ENCODE measurements at regions of chr13 and their contacts with region 1.

Region 1: DNA sequence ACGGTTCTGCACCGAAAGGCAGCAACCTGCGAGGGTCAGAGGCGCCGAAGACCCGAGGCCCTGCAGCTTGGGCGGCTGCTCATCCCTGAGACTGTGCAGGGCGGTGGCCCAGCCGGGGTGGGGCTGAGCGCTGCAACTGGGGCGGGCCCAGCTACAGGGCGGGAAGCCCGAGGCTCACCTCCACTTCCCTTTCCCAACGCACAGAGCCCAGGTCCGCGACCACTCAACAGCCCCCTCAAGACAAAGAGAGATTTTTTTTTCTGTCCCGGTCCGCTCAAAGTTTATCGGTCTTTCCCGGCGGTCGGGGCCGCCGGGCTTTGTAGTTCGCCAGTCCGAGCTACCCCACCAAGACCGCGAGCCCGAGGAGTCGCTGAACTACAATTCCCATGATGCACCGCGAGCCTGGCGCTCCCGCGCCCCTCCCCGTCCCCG is 573 bp downstream of the KATNAL1 start:
- DNase-seq: peak; percentile 65 to 94
- H3K4me3 ChIP-seq: peak overlapping the region; percentile 91 to 93
- H3K27ac ChIP-seq: peak overlapping the region; percentile 83 to 90
- H3K4me1 ChIP-seq: peaks cover 5 to 11% of the 10 kb centered on the region in 2 donors
- H3K27me3 ChIP-seq: no peaks in the 10 kb centered on the region
- CTCF ChIP-seq: no peak

Region 2: DNA sequence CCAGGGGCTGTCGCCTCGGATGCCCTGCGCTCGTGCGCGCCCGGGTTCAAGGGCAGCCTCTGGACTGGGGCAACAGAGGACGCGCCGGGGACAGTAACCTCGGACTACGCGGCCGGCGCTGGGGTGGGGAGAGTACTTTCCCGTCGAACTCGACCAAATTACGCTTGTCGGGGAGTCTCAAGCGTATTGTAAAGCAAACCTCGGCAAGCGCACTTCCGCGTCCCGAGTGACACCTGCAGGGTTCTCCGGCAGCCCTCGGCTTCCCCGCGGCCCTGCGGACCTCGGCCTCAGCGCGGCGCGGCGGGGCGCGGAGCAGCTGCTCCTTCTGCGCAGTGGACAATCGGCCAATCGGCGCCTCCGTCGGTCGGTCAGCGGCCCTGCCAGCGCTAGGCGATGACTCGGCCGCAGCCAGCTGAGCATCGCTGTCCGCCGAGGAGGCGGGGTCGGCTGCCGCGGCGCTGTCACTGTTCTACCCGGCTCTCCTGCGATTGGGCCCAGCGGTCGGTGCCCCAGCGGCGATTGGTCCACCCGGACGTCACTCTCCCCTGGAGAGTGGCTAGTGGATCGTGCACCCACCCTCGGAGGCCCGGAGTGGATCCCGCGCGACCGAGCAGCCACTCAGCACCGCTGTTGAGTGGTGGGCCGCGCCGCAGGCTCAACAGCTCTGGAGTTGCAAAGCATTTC is 1588.1 kb before region 1 on chr13 and contains the start of gene SLC46A3:
- intact Hi-C with region 1: loop called (anchors 10 kb)
- DNase-seq: peak; percentile 98 to 100
- H3K4me3 ChIP-seq: peak within 1 kb of the TSS; percentile 67 to 91
- H3K27ac ChIP-seq: peak within 1 kb of the TSS; percentile 96 to 97
- H3K4me1 ChIP-seq: peaks cover 0 to 6% of the 10 kb centered on the region in 2 donors
- H3K27me3 ChIP-seq: no peaks in the 10 kb centered on the region
- CTCF ChIP-seq: peak in 2 of 3 experiments; percentile 18 to 26
- total RNA-seq, gene SLC46A3: 2.8 TPM

Region 3: GRCh38 chr13:29923554-29924481 is 383.0 kb before region 1 on chr13:
- intact Hi-C with region 1: loop called (anchors 10 kb)
- DNase-seq: peak; percentile 81 to 96
- H3K4me3 ChIP-seq: no peak overlapping the region
- H3K27ac ChIP-seq: peak overlapping the region; percentile 85 to 93
- H3K4me1 ChIP-seq: peaks cover 15 to 36% of the 10 kb centered on the region in 2 donors
- H3K27me3 ChIP-seq: no peaks in the 10 kb centered on the region
- CTCF ChIP-seq: peak; percentile 80 to 92 (median 91)

Region 4: DNA sequence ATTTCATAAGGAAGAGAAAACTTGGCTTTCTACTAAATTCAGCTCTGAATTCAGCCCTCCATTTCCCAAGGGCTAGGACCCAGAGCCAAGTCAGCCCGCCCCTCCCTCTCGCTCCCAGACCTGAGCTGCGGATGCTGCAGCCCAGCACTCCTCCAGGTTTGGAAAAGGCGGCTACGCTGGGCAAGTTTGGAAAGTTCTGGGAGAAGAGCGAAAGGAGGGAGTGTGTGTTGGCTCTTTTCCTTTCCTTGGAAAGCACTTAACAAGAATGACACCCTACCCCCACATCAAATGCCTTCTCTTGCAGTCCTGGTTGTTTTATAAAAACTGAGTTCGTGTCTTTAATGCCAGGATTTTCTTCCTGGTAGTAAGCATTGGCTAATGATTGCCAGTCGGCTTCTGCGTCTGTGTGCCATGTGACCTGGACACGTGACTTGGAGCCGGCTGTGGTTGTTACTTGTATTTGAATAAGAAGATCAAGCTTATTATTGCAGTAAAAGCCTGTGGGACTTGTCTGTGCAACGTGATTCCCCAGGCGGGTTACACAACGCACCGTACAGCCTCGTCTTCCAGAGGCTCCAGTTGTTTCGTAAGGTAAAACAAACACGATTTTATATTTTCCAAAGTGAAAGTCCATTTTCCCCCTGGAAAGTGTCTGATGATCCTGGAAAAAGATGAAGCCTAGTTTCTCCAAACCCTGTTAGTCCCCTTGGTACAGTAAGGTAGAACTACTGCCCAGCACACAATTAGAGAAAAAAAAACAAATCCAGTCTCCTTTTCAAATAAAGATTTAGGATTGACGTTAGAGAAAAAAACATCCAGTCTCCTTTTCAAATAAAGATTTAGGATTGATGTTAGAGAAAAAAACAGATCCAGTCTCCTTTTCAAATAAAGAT is 88.7 kb after region 1 on chr13:
- intact Hi-C with region 1: loop called (anchors 1 kb)
- DNase-seq: peak; percentile 85 to 95
- H3K4me3 ChIP-seq: peak overlapping the region; percentile 65 to 86
- H3K27ac ChIP-seq: peak overlapping the region; percentile 58 to 89
- H3K4me1 ChIP-seq: no peaks in the 10 kb centered on the region
- H3K27me3 ChIP-seq: no peaks in the 10 kb centered on the region
- CTCF ChIP-seq: no peak

Region 5: GRCh38 chr13:30673669-30674521 is 367.1 kb after region 1 on chr13:
- intact Hi-C with region 1: loop called (anchors 10 kb)
- DNase-seq: peak; percentile 79 to 96
- H3K4me3 ChIP-seq: peak overlapping the region; percentile 53 to 64
- H3K27ac ChIP-seq: peak overlapping the region; percentile 59 to 88
- H3K4me1 ChIP-seq: no peaks in the 10 kb centered on the region
- H3K27me3 ChIP-seq: no peaks in the 10 kb centered on the region
- CTCF ChIP-seq: peak; percentile 58 to 81 (median 61)

Measured in ascending aorta (tissue), 2 donors.